Left colon (tissue), 2 donors: ENCODE measurements at regions of chr12 and their contacts with region 1.

Region 1: GRCh38 chr12:104360987-104361714 is 57.6 kb downstream of the EID3 start:
- DNase-seq: no peak
- ATAC-seq: no peak

Region 2: DNA sequence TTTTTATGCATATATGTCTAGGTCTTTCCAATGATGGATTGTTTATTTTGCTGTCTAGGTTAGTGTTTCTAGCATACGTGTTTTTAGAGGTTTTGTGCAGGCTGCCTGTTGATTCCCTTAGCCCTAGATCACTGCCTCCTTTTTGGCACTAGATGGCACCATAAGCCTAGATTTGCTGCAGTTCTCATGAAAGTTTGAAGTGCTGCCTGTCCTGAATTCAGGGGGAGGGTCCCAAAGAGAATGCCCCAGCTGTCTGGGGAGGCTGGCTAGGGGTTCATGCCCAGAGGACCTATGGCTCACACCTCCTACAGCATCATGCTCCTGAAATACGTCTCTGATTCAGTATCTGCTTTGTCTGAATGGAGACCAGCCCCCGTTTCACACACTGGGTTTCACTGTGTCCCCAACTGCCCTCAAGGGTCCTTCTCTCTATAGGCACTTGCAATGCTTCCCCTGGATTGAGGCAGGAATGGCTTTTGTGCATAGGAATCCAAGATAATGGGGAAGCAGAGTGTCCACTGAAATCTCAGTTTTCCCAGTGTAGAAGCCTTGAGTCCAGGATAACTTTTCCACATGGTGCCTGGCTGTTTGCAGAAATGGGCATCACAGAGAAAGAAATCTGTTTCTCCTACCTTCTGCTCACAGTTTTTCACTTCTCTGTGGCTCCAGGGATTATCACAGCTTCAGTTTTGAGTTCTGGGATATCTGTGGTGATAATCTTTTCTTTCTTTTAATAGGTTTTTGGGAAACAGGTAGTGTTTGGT is 159.7 kb before region 1 on chr12:
- intact Hi-C with region 1: loop called (anchors 5 to 10 kb)
- DNase-seq: peak in 1 of 2 donors; percentile 17
- ATAC-seq: peak; percentile 71